PC-3 (cell line): ENCODE measurements at regions of chr9 and their contacts with region 1.

Region 1: GRCh38 chr9:128115187-128116103 is 12.1 kb downstream of the PTGES2 start:
- DNase-seq: no peak
- ATAC-seq: no peak
- H3K4me3 ChIP-seq: no peak overlapping the region
- H3K27ac ChIP-seq: no peak overlapping the region
- H3K4me1 ChIP-seq: peaks cover 6% of the 10 kb centered on the region
- H3K27me3 ChIP-seq: no peaks in the 10 kb centered on the region
- CTCF ChIP-seq: no peak

Region 2: GRCh38 chr9:127854184-127854806 is 261.1 kb before region 1 on chr9 and contains the start of gene ENG:
- CTCF ChIA-PET with region 1: no interaction called
- POLR2A ChIA-PET with region 1: no interaction called
- intact Hi-C with region 1: no loop called
- DNase-seq: no peak
- ATAC-seq: peak; percentile 62
- H3K4me3 ChIP-seq: no peak within 1 kb of the TSS
- H3K27ac ChIP-seq: no peak within 1 kb of the TSS
- H3K4me1 ChIP-seq: no peaks in the 10 kb centered on the region
- H3K27me3 ChIP-seq: no peaks in the 10 kb centered on the region
- CTCF ChIP-seq: no peak
- total RNA-seq, gene ENG: 1.1 and 1.2 TPM in 2 replicates

Region 3: DNA sequence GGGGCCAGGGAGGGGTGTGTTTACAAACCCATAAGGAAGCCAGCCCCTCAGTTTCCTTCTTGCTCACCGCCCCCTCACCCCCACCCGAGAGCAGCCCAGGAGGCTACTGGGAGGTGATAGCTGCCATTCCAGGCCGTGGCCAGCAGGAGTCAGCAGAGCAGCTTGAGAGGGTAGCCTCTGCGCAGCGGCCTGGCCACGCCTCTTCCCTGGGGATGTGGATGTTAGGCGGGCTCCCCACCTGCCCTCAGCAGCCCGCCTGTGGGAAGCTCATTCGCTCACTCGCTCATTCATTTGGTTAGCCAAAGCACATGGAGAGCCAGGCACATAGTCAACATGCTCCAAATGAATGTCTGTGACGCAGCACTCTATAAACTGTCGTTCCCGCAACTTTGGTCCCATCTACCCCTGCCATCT is 171.7 kb before region 1 on chr9:
- CTCF ChIA-PET with region 1: no interaction called
- POLR2A ChIA-PET with region 1: interaction called, 21 read pairs
- intact Hi-C with region 1: no loop called
- DNase-seq: peak; percentile 77
- ATAC-seq: peak; percentile 92
- H3K4me3 ChIP-seq: no peak overlapping the region
- H3K27ac ChIP-seq: no peak overlapping the region
- H3K4me1 ChIP-seq: no peaks in the 10 kb centered on the region
- H3K27me3 ChIP-seq: no peaks in the 10 kb centered on the region
- CTCF ChIP-seq: peak; percentile 84